Mammary epithelial cell (primary cell): ENCODE measurements at regions of chr13 and their contacts with region 1.

Region 1: DNA sequence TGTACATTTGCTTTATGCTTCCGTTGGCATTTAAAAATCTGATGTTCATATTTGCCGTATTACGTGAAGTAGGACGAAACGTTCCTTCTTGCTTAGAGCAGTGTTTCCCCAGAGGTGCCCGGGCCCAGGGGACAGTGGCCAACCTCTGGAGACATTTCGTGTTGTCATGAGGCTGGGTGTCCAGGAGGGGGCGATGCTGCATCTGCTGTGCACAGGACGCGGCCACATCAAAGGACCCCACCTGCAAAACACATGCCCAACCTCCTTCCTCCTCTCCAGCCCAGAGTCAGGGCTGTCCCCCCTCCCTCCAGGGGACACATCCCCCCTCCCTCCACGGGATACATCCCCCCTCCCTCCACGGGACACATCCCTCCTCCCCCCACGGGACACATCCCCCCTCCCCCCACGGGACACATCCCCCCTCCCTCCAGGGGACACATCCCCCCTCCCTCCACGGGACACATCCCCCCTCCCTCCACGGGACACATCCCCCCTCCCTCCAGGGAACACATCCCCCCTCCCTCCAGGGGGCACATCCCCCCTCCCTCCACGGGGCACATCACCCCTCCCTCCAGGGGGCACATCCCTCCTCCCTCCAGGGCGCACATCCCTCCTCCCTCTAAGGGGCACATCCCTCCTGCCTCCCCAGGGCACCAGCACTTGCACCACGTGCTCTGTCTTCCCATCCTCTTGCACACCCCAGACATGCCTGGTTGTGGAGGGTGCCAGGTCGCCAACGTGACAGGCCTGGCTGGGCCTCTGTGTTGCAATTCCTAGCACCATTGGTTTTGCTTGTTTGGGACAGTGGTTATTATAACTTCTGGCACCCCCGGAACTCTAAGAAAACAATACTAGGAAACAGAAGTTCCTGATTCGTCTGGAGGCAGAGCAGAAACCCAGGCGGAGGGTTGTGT is 46.7 kb downstream of the GAS6 start:
- DNase-seq: peak; percentile 75
- H3K4me3 ChIP-seq: no peak overlapping the region
- H3K27ac ChIP-seq: no peak overlapping the region
- H3K4me1 ChIP-seq: peaks cover 30% of the 10 kb centered on the region
- H3K27me3 ChIP-seq: no peaks in the 10 kb centered on the region
- CTCF ChIP-seq: peak; percentile 76 to 95

Region 2: GRCh38 chr13:113742000-113742441 is 75.2 kb before region 1 on chr13:
- CTCF ChIA-PET with region 1: no interaction called
- dilution Hi-C with region 1: no loop called
- in situ Hi-C with region 1: no loop called
- intact Hi-C with region 1: no loop called
- DNase-seq: peak; percentile 27
- H3K4me3 ChIP-seq: no peak overlapping the region
- H3K27ac ChIP-seq: no peak overlapping the region
- H3K4me1 ChIP-seq: peaks cover 12% of the 10 kb centered on the region
- H3K27me3 ChIP-seq: no peaks in the 10 kb centered on the region
- CTCF ChIP-seq: no peak

Region 3: GRCh38 chr13:113837554-113838355 is 20.6 kb after region 1 on chr13:
- CTCF ChIA-PET with region 1: no interaction called
- dilution Hi-C with region 1: no loop called
- in situ Hi-C with region 1: no loop called
- intact Hi-C with region 1: loop called (anchors 1 kb)
- DNase-seq: peak; percentile 98
- H3K4me3 ChIP-seq: peak overlapping the region in 2 of 3 experiments; percentile 48 to 50
- H3K27ac ChIP-seq: peak overlapping the region; percentile 95
- H3K4me1 ChIP-seq: peaks cover 47% of the 10 kb centered on the region
- H3K27me3 ChIP-seq: no peaks in the 10 kb centered on the region
- CTCF ChIP-seq: no peak

Region 4: DNA sequence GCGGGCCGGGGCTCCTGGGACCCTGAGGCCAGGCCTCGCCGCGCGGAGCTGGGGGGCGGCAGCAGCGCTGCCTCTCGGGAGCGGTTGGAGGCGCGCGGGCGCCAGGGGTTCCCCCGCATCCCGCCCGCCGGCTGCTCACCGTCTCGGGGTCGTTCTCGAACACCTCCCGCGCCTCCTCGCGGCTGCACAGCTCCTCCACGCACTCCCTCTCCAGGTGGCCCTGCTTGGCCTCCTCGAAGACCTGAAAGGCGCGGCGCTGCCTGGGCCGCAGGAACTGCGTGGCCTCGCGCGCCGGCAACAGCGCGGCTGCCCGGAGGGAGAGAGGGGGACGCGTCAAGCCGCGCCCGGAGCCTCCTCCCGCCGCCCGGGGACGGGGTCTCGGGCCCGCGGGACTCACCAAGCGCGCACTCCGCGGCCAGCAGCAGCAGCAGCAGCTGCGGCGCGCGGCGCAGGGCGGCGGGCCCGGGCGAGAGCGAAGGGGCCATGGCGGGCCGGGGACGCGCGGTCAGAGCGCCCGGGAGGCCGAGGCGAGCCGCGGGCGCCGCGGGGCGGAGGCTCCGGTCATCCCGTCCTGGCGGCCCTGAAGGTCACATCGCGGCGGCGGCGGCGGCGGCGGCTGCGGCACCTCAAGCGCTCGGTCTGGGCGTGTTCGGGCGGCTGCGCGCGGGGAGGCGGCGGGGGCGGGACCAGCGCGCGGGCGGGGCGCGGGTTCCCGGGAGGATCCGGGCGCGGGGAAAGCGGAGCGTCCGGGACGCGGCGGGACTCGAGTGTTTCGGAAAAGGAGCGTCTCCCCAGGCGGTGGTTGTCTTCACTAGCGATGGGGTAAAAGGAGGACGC is 46.5 kb after region 1 on chr13 and contains the start of gene GAS6:
- CTCF ChIA-PET with region 1: no interaction called
- dilution Hi-C with region 1: no loop called
- in situ Hi-C with region 1: loop called in 1 of 2 experiments (anchors 5 kb)
- intact Hi-C with region 1: loop called (anchors 1 kb)
- DNase-seq: peak; percentile 46
- H3K4me3 ChIP-seq: peak within 1 kb of the TSS; percentile 45 to 86 (median 66)
- H3K27ac ChIP-seq: peak within 1 kb of the TSS; percentile 71
- H3K4me1 ChIP-seq: peaks cover 38% of the 10 kb centered on the region
- H3K27me3 ChIP-seq: no peaks in the 10 kb centered on the region
- CTCF ChIP-seq: peak in 1 of 2 donors; percentile 32
- total RNA-seq, gene GAS6: 221 to 311 TPM

Region 5: GRCh38 chr13:113897161-113897560 is 80.0 kb after region 1 on chr13:
- CTCF ChIA-PET with region 1: no interaction called
- dilution Hi-C with region 1: no loop called
- in situ Hi-C with region 1: no loop called
- intact Hi-C with region 1: loop called (anchors 2 kb)
- DNase-seq: peak; percentile 94
- H3K4me3 ChIP-seq: no peak overlapping the region
- H3K27ac ChIP-seq: peak overlapping the region; percentile 87
- H3K4me1 ChIP-seq: peaks cover 30% of the 10 kb centered on the region
- H3K27me3 ChIP-seq: no peaks in the 10 kb centered on the region
- CTCF ChIP-seq: no peak

Region 6: DNA sequence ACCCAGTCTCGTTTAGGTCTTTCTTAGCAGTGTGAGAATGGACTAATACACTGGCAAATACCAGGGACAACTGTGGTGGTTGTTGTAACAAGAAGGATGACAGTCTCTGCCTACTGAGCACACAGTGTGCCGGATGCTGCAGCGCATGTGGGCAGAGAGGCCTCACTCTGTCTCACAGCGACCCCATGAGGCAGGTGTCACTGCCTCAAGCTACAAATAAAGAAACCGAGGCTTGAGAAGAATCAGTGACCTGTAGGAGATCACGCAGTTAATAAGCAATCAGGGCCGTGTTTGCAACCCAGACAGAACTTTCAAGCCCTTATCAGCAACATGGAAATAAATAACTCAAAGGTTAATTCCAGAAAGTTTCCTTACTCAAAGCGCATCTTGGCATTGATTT is 87.2 kb after region 1 on chr13:
- CTCF ChIA-PET with region 1: no interaction called
- dilution Hi-C with region 1: no loop called
- in situ Hi-C with region 1: no loop called
- intact Hi-C with region 1: loop called (anchors 2 kb)
- DNase-seq: no peak
- H3K4me3 ChIP-seq: no peak overlapping the region
- H3K27ac ChIP-seq: no peak overlapping the region
- H3K4me1 ChIP-seq: peaks cover 4% of the 10 kb centered on the region
- H3K27me3 ChIP-seq: no peaks in the 10 kb centered on the region
- CTCF ChIP-seq: peak; percentile 45 to 69

Region 7: GRCh38 chr13:113941571-113942191 is 124.5 kb after region 1 on chr13:
- CTCF ChIA-PET with region 1: no interaction called
- dilution Hi-C with region 1: no loop called
- in situ Hi-C with region 1: loop called in 1 of 2 experiments (anchors 5 kb)
- intact Hi-C with region 1: no loop called
- DNase-seq: peak; percentile 48
- H3K4me3 ChIP-seq: no peak overlapping the region
- H3K27ac ChIP-seq: no peak overlapping the region
- H3K4me1 ChIP-seq: peaks cover 5% of the 10 kb centered on the region
- H3K27me3 ChIP-seq: peaks cover 2% of the 10 kb centered on the region
- CTCF ChIP-seq: no peak

Region 8: DNA sequence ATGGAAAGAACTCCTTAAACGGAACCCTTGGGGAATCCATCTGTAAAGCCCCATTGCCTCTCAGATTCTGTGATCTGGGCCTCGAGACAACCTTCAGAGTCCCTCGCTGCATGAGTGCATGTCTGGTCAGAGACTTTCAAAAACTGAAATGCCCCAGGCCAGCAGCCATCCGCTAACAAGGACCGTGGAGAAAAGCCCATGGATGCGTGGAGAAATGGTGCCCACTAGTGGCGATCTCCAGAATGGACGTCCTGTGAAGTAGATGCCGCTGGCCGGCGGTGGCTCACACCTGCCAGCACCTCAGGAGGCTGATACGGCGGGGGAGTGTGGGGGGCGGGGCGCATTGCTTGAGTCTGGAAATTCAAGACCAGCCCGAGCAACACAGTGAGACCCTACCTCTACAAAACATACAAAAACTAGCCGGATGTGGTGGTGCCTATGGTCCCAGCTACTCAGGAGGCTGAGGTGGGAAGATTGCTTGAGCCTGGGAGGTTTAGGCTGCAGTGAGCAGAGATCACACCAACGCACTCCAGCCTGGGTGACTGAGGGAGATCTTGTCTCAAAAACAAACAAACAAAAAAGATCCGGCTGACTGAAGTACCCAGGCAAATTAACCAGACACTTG is 409.6 kb after region 1 on chr13:
- CTCF ChIA-PET with region 1: no interaction called
- dilution Hi-C with region 1: no loop called
- in situ Hi-C with region 1: no loop called
- intact Hi-C with region 1: loop called (anchors 1 kb)
- DNase-seq: peak; percentile 69
- H3K4me3 ChIP-seq: no peak overlapping the region
- H3K27ac ChIP-seq: no peak overlapping the region
- H3K4me1 ChIP-seq: peaks cover 4% of the 10 kb centered on the region
- H3K27me3 ChIP-seq: no peaks in the 10 kb centered on the region
- CTCF ChIP-seq: peak; percentile 97